ENCODE measurements at regions of chr9 and their contacts with region 1.

Region 1: DNA sequence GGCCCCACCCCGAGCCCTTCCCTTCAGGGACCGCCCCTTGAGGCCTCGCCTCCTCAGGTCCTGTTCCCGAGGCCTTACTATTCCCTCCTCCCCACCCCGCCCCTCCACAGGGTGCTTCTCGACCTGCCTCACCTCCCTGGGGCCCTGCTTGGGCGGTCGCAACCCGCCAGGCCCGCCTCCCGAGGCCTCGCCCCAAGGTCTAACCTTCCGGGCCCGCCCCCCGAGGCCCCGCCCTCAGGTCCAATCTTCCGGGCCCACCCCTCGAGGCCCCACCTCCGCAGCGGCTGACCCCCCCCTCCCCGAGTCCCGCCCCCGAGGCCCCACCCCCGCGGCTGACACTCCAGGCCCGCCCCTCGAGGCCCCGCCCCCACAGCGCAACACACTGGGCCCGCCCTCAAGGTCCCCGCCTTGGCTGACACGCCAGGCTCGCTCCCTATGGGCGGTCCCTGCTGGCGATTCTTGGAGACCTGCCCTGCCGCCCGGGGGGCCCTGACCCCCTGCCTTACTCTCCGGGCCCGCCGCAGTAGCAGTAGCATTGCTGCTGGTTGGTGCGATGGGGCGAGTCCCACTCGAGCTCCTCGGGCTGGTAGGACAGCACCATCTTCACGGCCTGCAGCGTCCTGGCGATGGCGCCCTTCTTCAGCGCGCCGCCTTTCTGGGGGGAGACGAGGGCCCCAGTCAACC is 8.2 kb downstream of the PHF19 start:
- DNase-seq: peak; percentile 98
- ATAC-seq: peak; percentile 91
- H3K4me3 Mint-ChIP-seq: peak overlapping the region; percentile 81
- H3K27ac Mint-ChIP-seq: peak overlapping the region; percentile 97
- H3K4me1 Mint-ChIP-seq: peaks cover 47% of the 10 kb centered on the region
- H3K27me3 Mint-ChIP-seq: no peaks in the 10 kb centered on the region
- CTCF ChIP-seq: peak; percentile 51

Region 2: GRCh38 chr9:120898396-120898795 is 29.6 kb after region 1 on chr9:
- CTCF ChIA-PET with region 1: interaction called, 11 read pairs
- POLR2A ChIA-PET with region 1: interaction called, 2,439 read pairs
- intact Hi-C with region 1: no loop called
- DNase-seq: no peak
- ATAC-seq: no peak
- H3K4me3 Mint-ChIP-seq: peak overlapping the region; percentile 3
- H3K27ac Mint-ChIP-seq: peak overlapping the region; percentile 86
- H3K4me1 Mint-ChIP-seq: peaks cover 84% of the 10 kb centered on the region
- H3K27me3 Mint-ChIP-seq: no peaks in the 10 kb centered on the region
- CTCF ChIP-seq: no peak

Region 3: DNA sequence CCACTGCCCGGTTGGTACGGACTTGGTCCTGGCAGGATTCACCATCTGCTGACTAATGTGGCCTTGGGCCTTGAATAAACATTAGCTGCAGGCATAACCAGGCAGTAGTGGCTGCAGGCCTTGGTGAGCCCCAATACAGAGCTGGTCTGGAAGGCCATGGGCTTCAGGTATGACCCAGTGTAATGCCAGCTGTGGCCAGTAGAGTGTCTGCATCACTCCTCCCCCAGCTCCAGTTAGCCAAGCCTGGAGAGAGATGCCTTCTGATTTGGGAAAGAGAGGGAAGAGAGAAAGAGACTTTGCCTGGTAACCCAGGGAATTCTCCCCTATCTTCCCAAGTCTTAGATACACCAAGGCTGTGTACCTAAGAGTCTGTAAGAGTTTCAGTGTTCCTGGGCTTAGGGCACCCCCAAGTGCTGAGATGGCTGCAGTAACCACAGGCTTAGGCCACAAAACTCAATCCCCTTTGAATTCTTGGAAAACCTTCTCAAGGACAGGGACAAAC is 186.9 kb after region 1 on chr9:
- CTCF ChIA-PET with region 1: no interaction called
- POLR2A ChIA-PET with region 1: no interaction called
- intact Hi-C with region 1: no loop called
- DNase-seq: no peak
- ATAC-seq: peak; percentile 66
- H3K4me3 Mint-ChIP-seq: no peak overlapping the region
- H3K27ac Mint-ChIP-seq: no peak overlapping the region
- H3K4me1 Mint-ChIP-seq: peaks cover 6% of the 10 kb centered on the region
- H3K27me3 Mint-ChIP-seq: no peaks in the 10 kb centered on the region
- CTCF ChIP-seq: peak; percentile 49